Naive thymus-derived CD4-positive, alpha-beta T cell (primary cell): ENCODE measurements at regions of chr6 and their contacts with region 1.

Region 1: DNA sequence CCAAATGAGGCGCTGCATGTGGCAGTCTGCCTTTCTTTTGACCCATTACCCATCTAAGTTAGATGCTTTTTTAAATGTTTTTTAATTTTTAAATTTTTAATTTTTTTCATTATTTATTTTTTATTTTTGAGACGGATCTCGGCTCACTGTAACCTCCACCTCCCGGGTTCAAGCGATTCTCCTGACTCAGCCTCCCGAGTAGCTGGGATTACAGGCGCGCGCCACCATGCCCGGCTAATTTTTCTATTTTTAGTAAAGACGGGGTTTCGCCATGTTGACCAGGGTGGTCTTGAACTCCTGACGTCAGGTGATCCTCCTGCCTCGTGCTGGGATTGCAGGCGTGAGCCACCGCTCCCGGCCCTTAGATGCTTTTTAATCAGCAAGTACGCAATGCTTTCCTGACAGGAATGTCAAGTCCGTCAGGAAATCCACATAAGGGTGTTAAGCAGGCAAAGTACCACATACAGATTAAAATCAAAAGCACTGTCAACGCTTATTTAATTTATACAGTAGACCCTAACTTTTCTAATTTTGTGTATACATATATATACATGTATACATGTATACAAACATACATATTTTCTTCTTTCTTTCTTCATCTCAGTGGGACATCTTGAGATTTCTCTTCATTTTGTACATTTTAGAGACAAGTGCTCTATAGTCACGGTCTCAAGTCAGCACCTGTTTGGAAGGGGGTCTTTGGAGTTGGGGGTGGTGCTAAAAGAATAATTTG is 995 bp upstream of the GSTA4 start:
- DNase-seq: peak in 5 of 9 donors; percentile 21 to 43 (median 35)
- ATAC-seq: no peak
- H3K4me3 ChIP-seq: peak overlapping the region; percentile 83
- H3K4me3 Mint-ChIP-seq: peak overlapping the region; percentile 87 to 98 (median 94)
- H3K27ac ChIP-seq: peak overlapping the region; percentile 43
- H3K27ac Mint-ChIP-seq: peak overlapping the region; percentile 97 to 100 (median 99)
- H3K4me1 ChIP-seq: peaks cover 4 to 5% of the 10 kb centered on the region in 2 donors
- H3K4me1 Mint-ChIP-seq: peaks cover 10 to 37% (median 29%) of the 10 kb centered on the region in 7 donors
- H3K27me3 ChIP-seq: no peaks in the 10 kb centered on the region
- H3K27me3 Mint-ChIP-seq: peaks cover 0 to 10% (median 0%) of the 10 kb centered on the region in 5 donors

Region 2: DNA sequence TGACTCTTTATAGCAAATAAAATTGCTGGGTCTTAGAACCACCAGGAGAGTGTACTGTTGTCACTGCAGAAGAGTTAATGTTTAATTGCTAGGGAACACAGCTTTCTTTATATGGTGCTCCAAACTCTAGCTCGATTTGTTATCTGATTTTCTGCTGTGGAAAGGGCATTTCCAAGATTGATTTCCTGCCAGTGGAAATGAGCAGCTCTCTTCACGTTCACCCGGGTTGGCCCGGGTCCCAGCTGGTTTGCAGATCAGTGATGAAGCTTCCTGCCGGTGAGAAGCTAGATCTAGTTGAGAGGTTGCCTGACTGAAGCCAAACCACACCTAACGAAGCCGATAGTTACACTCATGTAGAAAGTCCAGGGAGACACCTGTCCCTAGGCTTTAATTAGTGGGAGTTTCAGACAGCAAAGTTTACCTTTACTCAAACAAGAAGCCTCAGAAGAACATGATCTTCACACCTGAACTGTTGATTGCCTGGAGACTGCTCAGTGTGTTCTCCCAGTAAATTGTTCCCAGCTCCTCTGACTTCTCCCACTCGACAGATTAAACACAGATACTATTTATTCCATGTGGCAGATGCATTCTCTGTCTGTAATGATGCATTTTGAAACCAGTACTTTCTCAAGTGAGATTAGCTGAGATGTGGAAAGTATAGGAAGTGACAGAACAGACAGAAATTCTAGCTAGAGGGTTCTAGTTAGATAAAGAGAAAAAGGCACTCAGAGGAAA is 606.3 kb before region 1 on chr6:
- CTCF ChIA-PET with region 1: no interaction called
- POLR2A ChIA-PET with region 1: interaction called, 3 read pairs
- intact Hi-C with region 1: loop called (anchors 5 to 10 kb)
- DNase-seq: peak; percentile 33 to 79 (median 62)
- ATAC-seq: peak; percentile 60
- H3K4me3 ChIP-seq: peak overlapping the region; percentile 62
- H3K4me3 Mint-ChIP-seq: peak overlapping the region; percentile 75 to 89 (median 86)
- H3K27ac ChIP-seq: peak overlapping the region; percentile 89
- H3K27ac Mint-ChIP-seq: peak overlapping the region; percentile 93 to 100 (median 98)
- H3K4me1 ChIP-seq: peaks cover 59 to 75% of the 10 kb centered on the region in 2 donors
- H3K4me1 Mint-ChIP-seq: peaks cover 49 to 96% (median 90%) of the 10 kb centered on the region in 7 donors
- H3K27me3 ChIP-seq: no peaks in the 10 kb centered on the region
- H3K27me3 Mint-ChIP-seq: peaks cover 0 to 6% (median 0%) of the 10 kb centered on the region in 5 donors

Region 3: DNA sequence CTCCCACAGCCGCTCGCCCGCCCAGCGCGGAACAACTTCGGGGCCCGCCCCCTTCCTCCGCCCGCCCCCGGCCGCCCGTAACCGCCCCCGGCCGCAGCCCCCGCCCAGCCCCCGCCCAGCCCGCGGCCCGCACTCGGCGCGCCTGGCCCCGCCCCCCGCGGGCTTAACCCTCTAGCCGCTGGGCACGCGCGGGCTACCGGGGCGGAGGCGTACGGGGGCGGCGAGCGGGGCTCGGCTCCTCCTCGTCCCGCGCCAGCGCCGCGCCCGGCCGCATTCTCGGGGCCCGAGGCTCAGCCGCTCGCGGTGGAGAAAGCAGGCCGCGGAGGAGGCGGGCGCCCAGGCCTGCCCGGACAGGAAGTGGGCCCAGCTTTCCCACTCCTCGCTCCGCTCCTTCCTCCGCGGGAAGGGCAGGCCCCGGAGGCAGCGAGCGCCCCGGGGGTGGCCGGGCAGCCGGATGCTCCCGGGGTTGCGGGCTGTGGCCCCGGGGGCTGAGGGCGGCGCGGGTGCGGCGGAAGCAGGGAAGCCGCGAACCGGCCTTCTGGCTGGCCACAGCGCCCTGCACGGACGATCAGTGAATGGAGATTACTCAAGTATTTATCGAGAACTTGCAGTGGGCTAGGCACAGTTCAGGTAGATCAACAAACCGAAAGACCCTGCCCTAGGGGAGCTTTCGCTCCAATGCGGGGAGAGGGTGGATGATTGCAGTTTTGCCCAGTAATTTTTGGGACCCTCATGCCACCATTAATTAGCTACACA is 418.9 kb before region 1 on chr6 and contains the start of gene TRAM2:
- CTCF ChIA-PET with region 1: no interaction called
- POLR2A ChIA-PET with region 1: interaction called, 4 read pairs
- intact Hi-C with region 1: loop called (anchors 2 kb)
- DNase-seq: peak; percentile 67 to 86 (median 79)
- ATAC-seq: peak; percentile 90
- H3K4me3 ChIP-seq: peak within 1 kb of the TSS; percentile 76
- H3K4me3 Mint-ChIP-seq: peak within 1 kb of the TSS; percentile 83 to 95 (median 88)
- H3K27ac ChIP-seq: peak within 1 kb of the TSS; percentile 80
- H3K27ac Mint-ChIP-seq: peak within 1 kb of the TSS; percentile 72 to 93 (median 89)
- H3K4me1 ChIP-seq: peaks cover 27 to 34% of the 10 kb centered on the region in 2 donors
- H3K4me1 Mint-ChIP-seq: peaks cover 35 to 60% (median 49%) of the 10 kb centered on the region in 7 donors
- H3K27me3 ChIP-seq: no peaks in the 10 kb centered on the region
- H3K27me3 Mint-ChIP-seq: peaks cover 0 to 20% (median 0%) of the 10 kb centered on the region in 5 donors
- total RNA-seq, gene TRAM2: 8.9 to 10.9 (median 10.3) TPM

Region 4: DNA sequence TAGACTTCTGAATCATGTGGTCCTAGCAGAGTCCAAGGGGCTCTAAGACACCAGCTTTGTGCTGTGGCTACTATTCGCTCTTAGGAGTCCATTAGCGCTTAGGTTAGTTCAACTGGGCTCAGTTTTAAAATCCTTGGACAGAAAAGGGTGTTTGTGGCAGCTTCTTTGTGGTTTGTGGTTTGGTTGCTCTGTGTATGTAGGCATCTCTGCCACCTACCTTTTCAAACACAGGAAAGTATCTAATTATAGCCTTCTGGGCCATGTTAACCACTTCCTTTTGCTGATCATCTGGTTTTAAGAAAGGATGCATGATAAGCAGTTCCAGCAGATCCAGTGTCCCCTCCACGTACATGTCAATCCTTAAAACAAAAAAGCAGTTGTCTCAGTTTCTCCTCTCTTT is 11.8 kb before region 1 on chr6:
- CTCF ChIA-PET with region 1: interaction called, 5 read pairs
- POLR2A ChIA-PET with region 1: interaction called, 8 read pairs
- intact Hi-C with region 1: loop called (anchors 1 kb)
- DNase-seq: peak in 8 of 9 donors; percentile 53 to 77 (median 70)
- ATAC-seq: peak; percentile 93
- H3K4me3 ChIP-seq: peak overlapping the region; percentile 17
- H3K4me3 Mint-ChIP-seq: peak overlapping the region; percentile 30 to 82 (median 75)
- H3K27ac ChIP-seq: no peak overlapping the region
- H3K27ac Mint-ChIP-seq: peak overlapping the region in 7 of 9 donors; percentile 9 to 67 (median 29)
- H3K4me1 ChIP-seq: peaks cover 22 to 35% of the 10 kb centered on the region in 2 donors
- H3K4me1 Mint-ChIP-seq: peaks cover 20 to 53% (median 35%) of the 10 kb centered on the region in 7 donors
- H3K27me3 ChIP-seq: no peaks in the 10 kb centered on the region
- H3K27me3 Mint-ChIP-seq: peaks cover 4 to 34% (median 23%) of the 10 kb centered on the region in 5 donors

Region 5: GRCh38 chr6:53048431-53049195 is 52.5 kb after region 1 on chr6:
- CTCF ChIA-PET with region 1: no interaction called
- POLR2A ChIA-PET with region 1: no interaction called
- intact Hi-C with region 1: no loop called
- DNase-seq: peak in 3 of 9 donors; percentile 18 to 34 (median 31)
- ATAC-seq: peak; percentile 76
- H3K4me3 ChIP-seq: peak overlapping the region; percentile 12
- H3K4me3 Mint-ChIP-seq: peak overlapping the region; percentile 8 to 70 (median 54)
- H3K27ac ChIP-seq: no peak overlapping the region
- H3K27ac Mint-ChIP-seq: peak overlapping the region in 2 of 9 donors; percentile 4 to 32
- H3K4me1 ChIP-seq: peaks cover 11 to 12% of the 10 kb centered on the region in 2 donors
- H3K4me1 Mint-ChIP-seq: peaks cover 23 to 49% (median 34%) of the 10 kb centered on the region in 7 donors
- H3K27me3 ChIP-seq: no peaks in the 10 kb centered on the region
- H3K27me3 Mint-ChIP-seq: no peaks in the 10 kb centered on the region

Region 6: GRCh38 chr6:53348371-53349208 is 352.5 kb after region 1 on chr6 and contains the start of gene ELOVL5:
- CTCF ChIA-PET with region 1: no interaction called
- POLR2A ChIA-PET with region 1: no interaction called
- intact Hi-C with region 1: loop called in 1 of 2 experiments (anchors 5 kb)
- DNase-seq: peak; percentile 78 to 97 (median 87)
- ATAC-seq: peak; percentile 87
- H3K4me3 ChIP-seq: peak within 1 kb of the TSS; percentile 65
- H3K4me3 Mint-ChIP-seq: peak within 1 kb of the TSS; percentile 91 to 100 (median 98)
- H3K27ac ChIP-seq: peak within 1 kb of the TSS; percentile 89
- H3K27ac Mint-ChIP-seq: peak within 1 kb of the TSS; percentile 85 to 99 (median 96)
- H3K4me1 ChIP-seq: peaks cover 23 to 30% of the 10 kb centered on the region in 2 donors
- H3K4me1 Mint-ChIP-seq: peaks cover 34 to 48% (median 46%) of the 10 kb centered on the region in 7 donors
- H3K27me3 ChIP-seq: no peaks in the 10 kb centered on the region
- H3K27me3 Mint-ChIP-seq: peaks cover 0 to 18% (median 0%) of the 10 kb centered on the region in 5 donors
- total RNA-seq, gene ELOVL5: 49.7 to 124 (median 71.3) TPM

Region 7: DNA sequence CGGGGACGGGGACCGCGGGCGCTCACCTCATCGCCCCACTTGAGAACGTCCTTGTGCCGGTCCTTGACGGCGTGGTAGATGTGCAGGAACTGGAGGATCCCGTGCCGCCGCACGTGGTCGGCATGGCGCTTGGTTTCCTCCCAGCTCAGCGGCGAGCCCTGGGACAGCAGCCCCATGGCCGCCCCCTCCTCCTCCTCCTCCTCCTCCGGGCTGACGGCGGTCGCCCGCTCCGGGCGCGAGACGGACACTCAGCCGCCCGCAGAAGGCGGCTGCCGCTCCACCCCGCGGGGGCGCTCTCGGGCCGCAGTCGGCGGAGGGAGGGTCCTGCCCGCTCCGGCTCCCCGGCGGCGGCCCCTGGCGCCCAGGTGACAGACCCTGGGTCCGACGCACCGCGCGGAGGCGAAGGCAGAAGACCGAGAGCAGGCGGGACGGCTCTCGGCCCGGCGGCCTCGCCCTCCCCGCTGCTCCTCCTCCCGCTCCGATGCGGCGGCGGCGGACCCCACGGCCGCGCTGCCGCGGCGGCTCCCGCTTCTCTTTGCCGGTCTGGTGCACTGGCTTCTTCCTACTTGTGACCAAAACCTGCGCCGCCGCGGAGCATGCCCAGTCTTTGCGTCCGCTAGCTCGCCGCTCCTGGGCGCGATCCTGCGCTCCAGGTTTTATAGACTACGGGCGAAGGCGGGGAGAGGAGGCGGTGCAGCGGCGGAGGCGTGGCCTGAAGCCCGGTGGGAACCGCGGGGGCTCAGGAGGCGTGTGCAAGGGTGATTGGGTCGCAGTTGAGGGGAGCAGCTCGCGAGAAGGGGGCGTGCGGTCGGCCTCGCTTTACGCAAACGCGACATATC is 548.6 kb after region 1 on chr6 and contains the start of gene GCLC:
- CTCF ChIA-PET with region 1: no interaction called
- POLR2A ChIA-PET with region 1: no interaction called
- intact Hi-C with region 1: loop called (anchors 1 to 5 kb)
- DNase-seq: peak; percentile 70 to 85 (median 81)
- ATAC-seq: peak; percentile 75
- H3K4me3 ChIP-seq: peak within 1 kb of the TSS; percentile 83
- H3K4me3 Mint-ChIP-seq: peak within 1 kb of the TSS; percentile 87 to 100 (median 96)
- H3K27ac ChIP-seq: peak within 1 kb of the TSS; percentile 67
- H3K27ac Mint-ChIP-seq: peak within 1 kb of the TSS; percentile 84 to 94 (median 91)
- H3K4me1 ChIP-seq: peaks cover 22 to 23% of the 10 kb centered on the region in 2 donors
- H3K4me1 Mint-ChIP-seq: peaks cover 29 to 80% (median 66%) of the 10 kb centered on the region in 7 donors
- H3K27me3 ChIP-seq: no peaks in the 10 kb centered on the region
- H3K27me3 Mint-ChIP-seq: peaks cover 0 to 21% (median 0%) of the 10 kb centered on the region in 5 donors
- total RNA-seq, gene GCLC: 18.5 to 37.5 (median 27.6) TPM